HepG2 (cell line): ENCODE measurements at regions of chr2 and their contacts with region 1.

Region 1: GRCh38 chr2:25131567-25132298 is 36.6 kb downstream of the POMC start:
- DNase-seq: no peak
- ATAC-seq: no peak
- H3K4me3 ChIP-seq: no peak overlapping the region
- H3K27ac ChIP-seq: no peak overlapping the region
- H3K4me1 ChIP-seq: no peaks in the 10 kb centered on the region
- H3K27me3 ChIP-seq: peaks cover 9 to 36% of the 10 kb centered on the region in 2 experiments; a peak in 4 of 5 replicates
- CTCF ChIP-seq: no peak
- EP300 ChIP-seq: no peak
- POLR2A ChIP-seq: no peak
- RAD21 ChIP-seq: no peak

Region 2: GRCh38 chr2:24409700-24410556 is 721.8 kb before region 1 on chr2:
- CTCF ChIA-PET with region 1: no interaction called
- POLR2A ChIA-PET with region 1: no interaction called
- in situ Hi-C with region 1: loop called (anchors 25 kb)
- intact Hi-C with region 1: no loop called
- DNase-seq: peak; percentile 71
- ATAC-seq: peak; percentile 89
- H3K4me3 ChIP-seq: no peak overlapping the region
- H3K27ac ChIP-seq: no peak overlapping the region
- H3K4me1 ChIP-seq: 0 out of 2 replicates have a peak, but pooled peaks cover 4% of the 10 kb centered on the region
- H3K27me3 ChIP-seq: no peaks in the 10 kb centered on the region
- CTCF ChIP-seq: peak; percentile 90
- EP300 ChIP-seq: no peak
- POLR2A ChIP-seq: no peak
- RAD21 ChIP-seq: peak; percentile 65

Region 3: GRCh38 chr2:24792874-24793760 is 338.6 kb before region 1 on chr2 and contains the starts of genes CENPO and PTRHD1:
- CTCF ChIA-PET with region 1: no interaction called
- POLR2A ChIA-PET with region 1: interaction called, 3 read pairs
- in situ Hi-C with region 1: no loop called
- intact Hi-C with region 1: loop called (anchors 1 kb)
- DNase-seq: peak; percentile 98
- ATAC-seq: peak; percentile 93
- H3K4me3 ChIP-seq: peak within 1 kb of the TSS; percentile 85 to 95 (median 86)
- H3K27ac ChIP-seq: peak within 1 kb of the TSS; percentile 94
- H3K4me1 ChIP-seq: peaks cover 46% of the 10 kb centered on the region
- H3K27me3 ChIP-seq: no peaks in the 10 kb centered on the region; a peak in 1 of 5 replicates
- CTCF ChIP-seq: peak; percentile 97
- EP300 ChIP-seq: peak in 1 of 2 experiments; percentile 19; a peak in 1 of 4 replicates
- POLR2A ChIP-seq: peak; percentile 72 to 96
- RAD21 ChIP-seq: peak; percentile 91
- total RNA-seq, gene CENPO: 35.5 and 41.4 TPM in 2 replicates
- total RNA-seq, gene PTRHD1: 69.1 and 72.6 TPM in 2 replicates

Region 4: GRCh38 chr2:24971536-24972314 is 160.0 kb before region 1 on chr2 and contains the start of gene DNAJC27:
- CTCF ChIA-PET with region 1: interaction called, 47 read pairs
- POLR2A ChIA-PET with region 1: interaction called, 8 read pairs
- in situ Hi-C with region 1: loop called (anchors 5 kb)
- intact Hi-C with region 1: loop called (anchors 1 kb)
- DNase-seq: peak; percentile 95
- ATAC-seq: peak; percentile 97
- H3K4me3 ChIP-seq: peak within 1 kb of the TSS; percentile 80 to 90 (median 88)
- H3K27ac ChIP-seq: peak within 1 kb of the TSS; percentile 95
- H3K4me1 ChIP-seq: peaks cover 23% of the 10 kb centered on the region
- H3K27me3 ChIP-seq: no peaks in the 10 kb centered on the region; a peak in 1 of 5 replicates
- CTCF ChIP-seq: peak; percentile 20; the same call in 1 of the 2 replicates
- EP300 ChIP-seq: 0 out of 4 replicates have a peak, but pooled peaks of 1 of the 2 experiments have one; percentile 9
- POLR2A ChIP-seq: peak; percentile 95
- RAD21 ChIP-seq: peak; percentile 13; the same call in 1 of the 2 replicates
- total RNA-seq, gene DNAJC27: 2.3 and 3.1 TPM in 2 replicates

Region 5: GRCh38 chr2:24981411-24982136 is 150.2 kb before region 1 on chr2:
- CTCF ChIA-PET with region 1: interaction called, 47 read pairs
- POLR2A ChIA-PET with region 1: no interaction called
- in situ Hi-C with region 1: loop called (anchors 5 kb)
- intact Hi-C with region 1: no loop called
- DNase-seq: no peak
- ATAC-seq: no peak
- H3K4me3 ChIP-seq: no peak overlapping the region
- H3K27ac ChIP-seq: no peak overlapping the region
- H3K4me1 ChIP-seq: peaks cover 38% of the 10 kb centered on the region
- H3K27me3 ChIP-seq: peaks cover 0 to 5% of the 10 kb centered on the region in 2 experiments; a peak in 2 of 5 replicates
- CTCF ChIP-seq: no peak
- EP300 ChIP-seq: no peak
- POLR2A ChIP-seq: no peak
- RAD21 ChIP-seq: no peak

Region 6: GRCh38 chr2:25041928-25042320 is 89.8 kb before region 1 on chr2 and contains the start of gene EFR3B:
- CTCF ChIA-PET with region 1: no interaction called
- POLR2A ChIA-PET with region 1: no interaction called
- in situ Hi-C with region 1: no loop called
- intact Hi-C with region 1: loop called (anchors 1 kb)
- DNase-seq: peak; percentile 89
- ATAC-seq: peak; percentile 97
- H3K4me3 ChIP-seq: peak within 1 kb of the TSS; percentile 64 to 80 (median 80)
- H3K27ac ChIP-seq: no peak within 1 kb of the TSS
- H3K4me1 ChIP-seq: peaks cover 21% of the 10 kb centered on the region
- H3K27me3 ChIP-seq: peaks cover 0 to 48% of the 10 kb centered on the region in 2 experiments; a peak in 3 of 5 replicates
- CTCF ChIP-seq: no peak
- EP300 ChIP-seq: no peak
- POLR2A ChIP-seq: no peak
- RAD21 ChIP-seq: no peak
- total RNA-seq, gene EFR3B: 0.42 and 0.56 TPM in 2 replicates

Region 7: DNA sequence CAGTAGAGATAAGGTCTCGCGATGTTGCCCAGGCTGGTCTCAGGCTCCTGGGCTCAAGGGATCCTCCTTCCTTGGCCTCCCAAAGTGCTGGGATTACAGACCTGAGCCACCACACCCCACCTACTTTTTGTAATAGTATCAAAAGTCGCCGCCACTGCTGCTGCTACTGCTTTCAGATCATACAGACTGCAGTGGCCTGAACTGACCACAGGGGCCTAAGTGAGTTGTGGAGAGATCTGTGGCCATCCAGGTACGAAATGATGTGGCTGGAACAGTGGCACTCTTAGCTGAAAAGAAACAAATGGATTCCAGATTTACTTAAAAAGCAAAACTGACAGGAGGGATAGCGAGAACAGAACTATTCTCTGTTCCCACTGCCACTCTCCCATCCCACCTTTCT is 69.5 kb after region 1 on chr2:
- CTCF ChIA-PET with region 1: no interaction called
- POLR2A ChIA-PET with region 1: no interaction called
- in situ Hi-C with region 1: no loop called
- intact Hi-C with region 1: loop called (anchors 5 kb)
- DNase-seq: no peak
- ATAC-seq: peak; percentile 85
- H3K4me3 ChIP-seq: no peak overlapping the region
- H3K27ac ChIP-seq: no peak overlapping the region
- H3K4me1 ChIP-seq: peaks cover 14% of the 10 kb centered on the region
- H3K27me3 ChIP-seq: peaks cover 3 to 9% of the 10 kb centered on the region in 2 experiments; a peak in 3 of 5 replicates
- CTCF ChIP-seq: peak; percentile 20; the same call in 1 of the 2 replicates
- EP300 ChIP-seq: no peak
- POLR2A ChIP-seq: no peak
- RAD21 ChIP-seq: no peak